ENCODE measurements at regions of chr4 and their contacts with region 1.

Region 1: DNA sequence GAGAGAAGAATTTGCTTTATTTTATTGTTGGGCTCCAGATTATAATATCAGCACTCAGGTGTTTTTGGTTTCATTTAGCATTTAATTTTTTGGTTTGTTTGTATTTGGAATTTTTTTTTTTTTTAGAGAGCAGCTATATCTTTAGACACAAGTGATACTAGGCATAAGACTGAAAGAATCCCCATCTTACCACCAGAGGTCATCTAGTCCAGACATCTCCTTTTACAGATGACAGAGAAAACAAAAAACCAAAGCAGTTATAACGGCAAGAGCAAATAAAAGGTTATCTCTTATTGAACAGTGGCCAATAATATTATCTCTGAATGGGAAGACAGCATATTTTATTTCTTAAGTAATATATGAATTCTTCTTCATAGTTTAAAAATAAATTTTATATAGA is 22.8 kb downstream of the USP38 start:
- DNase-seq: no peak
- H3K4me3 ChIP-seq: no peak overlapping the region
- H3K27ac ChIP-seq: no peak overlapping the region
- H3K4me1 ChIP-seq: no peaks in the 10 kb centered on the region
- H3K27me3 ChIP-seq: no peaks in the 10 kb centered on the region
- CTCF ChIP-seq: peak in 2 of 4 experiments; percentile 22 to 35
- POLR2A ChIP-seq: no peak

Region 2: DNA sequence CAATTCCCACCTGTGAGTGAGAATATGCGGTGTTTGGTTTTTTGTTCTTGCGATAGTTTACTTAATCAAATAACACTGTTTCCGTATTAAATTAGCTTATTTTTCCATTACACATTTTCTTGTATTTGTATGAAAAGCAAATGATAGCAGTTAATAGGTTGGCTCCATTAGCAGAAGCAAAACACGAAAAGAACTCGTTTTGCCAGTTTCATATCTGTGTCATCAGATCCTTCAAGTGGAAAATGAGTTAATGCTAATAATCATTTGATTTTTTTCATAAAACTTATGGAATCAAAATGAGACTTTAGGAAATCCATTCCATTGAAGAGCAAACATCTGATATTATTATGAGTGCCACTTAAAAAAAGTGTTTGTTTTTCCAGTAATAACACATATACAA is 207.6 kb before region 1 on chr4:
- intact Hi-C with region 1: no loop called
- DNase-seq: no peak
- H3K4me3 ChIP-seq: no peak overlapping the region
- H3K27ac ChIP-seq: no peak overlapping the region
- H3K4me1 ChIP-seq: no peaks in the 10 kb centered on the region
- H3K27me3 ChIP-seq: no peaks in the 10 kb centered on the region
- CTCF ChIP-seq: no peak
- POLR2A ChIP-seq: no peak

Region 3: DNA sequence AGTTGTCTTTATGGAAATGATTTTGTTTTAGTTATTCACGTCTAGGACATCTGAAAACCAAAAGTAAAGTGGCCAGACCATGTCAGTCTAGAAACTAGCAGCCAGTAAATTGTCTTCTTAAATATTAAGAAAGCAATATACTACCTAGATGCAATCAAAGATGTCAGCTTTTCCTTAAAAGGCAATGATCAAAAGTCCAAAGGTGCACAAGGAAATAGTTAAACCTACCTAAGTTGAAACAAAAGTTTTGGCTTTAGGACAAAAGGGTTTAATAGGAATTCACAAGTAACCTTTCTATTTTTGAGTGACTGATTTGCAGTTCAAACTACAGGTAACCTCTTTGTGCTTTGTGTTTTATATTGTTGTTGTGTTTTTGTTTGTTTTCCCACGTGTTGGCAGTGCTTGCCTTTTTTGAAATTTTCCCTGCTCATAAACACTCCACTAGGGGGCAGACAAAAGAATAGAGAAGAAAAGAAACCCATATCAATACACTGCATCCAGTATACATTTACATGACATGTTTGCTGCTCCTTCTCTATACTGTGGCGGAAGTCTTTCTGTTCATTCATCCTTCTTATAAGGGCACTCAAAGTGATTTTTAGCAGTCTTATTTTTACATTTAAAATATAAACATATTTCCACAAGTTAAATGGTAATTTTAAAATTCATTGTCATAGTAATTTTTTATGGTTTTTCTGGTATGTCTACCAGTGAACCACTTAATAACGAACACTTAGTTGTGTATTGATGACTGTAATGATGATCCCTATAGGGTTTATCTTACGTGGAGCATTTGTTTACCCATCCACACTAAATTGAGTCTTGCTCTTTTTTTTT is 191.8 kb after region 1 on chr4:
- intact Hi-C with region 1: loop called (anchors 10 kb)
- DNase-seq: no peak
- H3K4me3 ChIP-seq: no peak overlapping the region
- H3K27ac ChIP-seq: no peak overlapping the region
- H3K4me1 ChIP-seq: no peaks in the 10 kb centered on the region
- H3K27me3 ChIP-seq: no peaks in the 10 kb centered on the region
- CTCF ChIP-seq: peak; percentile 22 to 71 (median 41)
- POLR2A ChIP-seq: no peak

Region 4: GRCh38 chr4:143482840-143483239 is 275.3 kb after region 1 on chr4:
- intact Hi-C with region 1: loop called (anchors 2 kb)
- DNase-seq: no peak
- H3K4me3 ChIP-seq: no peak overlapping the region
- H3K27ac ChIP-seq: no peak overlapping the region
- H3K4me1 ChIP-seq: no peaks in the 10 kb centered on the region
- H3K27me3 ChIP-seq: no peaks in the 10 kb centered on the region
- CTCF ChIP-seq: peak; percentile 12 to 69 (median 52)
- POLR2A ChIP-seq: no peak